Activated B cell treated with CpG ODN at 0.5 μM for 24 hours (primary cell): ENCODE measurements at regions of chr12 and their contacts with region 1.

Region 1: GRCh38 chr12:108664338-108665258 is 30.9 kb upstream of the SELPLG start:
- DNase-seq: peak; percentile 33
- ATAC-seq: peak; percentile 97
- H3K4me3 Mint-ChIP-seq: peak overlapping the region; percentile 36
- H3K27ac Mint-ChIP-seq: peak overlapping the region; percentile 85
- H3K4me1 Mint-ChIP-seq: peaks cover 57% of the 10 kb centered on the region
- H3K27me3 Mint-ChIP-seq: no peaks in the 10 kb centered on the region
- CTCF ChIP-seq: peak; percentile 61

Region 2: GRCh38 chr12:108257004-108257403 is 407.6 kb before region 1 on chr12:
- CTCF ChIA-PET with region 1: no interaction called
- POLR2A ChIA-PET with region 1: no interaction called
- intact Hi-C with region 1: no loop called
- DNase-seq: no peak
- ATAC-seq: no peak
- H3K4me3 Mint-ChIP-seq: no peak overlapping the region
- H3K27ac Mint-ChIP-seq: no peak overlapping the region
- H3K4me1 Mint-ChIP-seq: no peaks in the 10 kb centered on the region
- H3K27me3 Mint-ChIP-seq: peaks cover 16% of the 10 kb centered on the region
- CTCF ChIP-seq: no peak

Region 3: DNA sequence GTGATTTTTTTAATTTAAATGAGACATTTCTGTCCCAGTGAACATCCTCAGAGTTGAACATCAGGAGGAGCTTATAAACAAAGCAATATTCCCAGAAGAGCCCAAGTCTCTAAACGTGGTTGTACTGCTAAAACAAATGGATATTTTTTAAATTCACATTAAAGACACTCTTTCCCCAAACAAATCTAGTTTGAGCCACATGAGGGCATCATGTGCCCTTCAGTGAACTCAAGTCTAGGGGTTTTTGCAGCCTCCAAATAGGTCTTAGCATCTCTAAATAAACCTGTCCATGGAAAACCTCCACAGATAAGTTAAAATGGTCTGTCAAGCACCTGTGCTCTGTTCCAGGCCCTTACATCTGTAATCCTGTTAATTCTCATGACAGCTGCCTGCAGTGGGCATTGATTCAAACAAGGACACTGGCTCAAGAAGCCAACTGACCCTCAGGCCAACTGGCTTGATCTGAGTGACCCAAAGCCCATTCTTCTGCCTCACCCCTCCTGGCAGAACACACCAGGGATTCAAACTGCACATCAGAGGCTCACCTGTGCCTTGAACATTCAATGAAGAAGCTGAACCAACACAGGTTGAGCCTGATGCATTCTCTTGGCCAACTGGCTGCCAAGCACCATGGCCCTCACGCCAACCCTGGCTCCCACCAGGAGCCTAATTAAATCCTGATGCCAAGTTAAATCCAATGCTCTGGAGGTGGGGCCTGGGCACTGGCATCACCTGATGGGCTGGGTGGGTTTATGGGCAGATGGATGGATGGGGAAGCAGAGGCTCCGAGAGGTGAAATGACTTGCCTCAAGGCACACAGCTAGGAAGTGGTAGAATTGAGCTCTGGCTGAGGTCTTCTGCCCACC is 93.6 kb before region 1 on chr12:
- CTCF ChIA-PET with region 1: interaction called, 27 read pairs
- POLR2A ChIA-PET with region 1: interaction called, 11 read pairs
- intact Hi-C with region 1: no loop called
- DNase-seq: no peak
- ATAC-seq: no peak
- H3K4me3 Mint-ChIP-seq: no peak overlapping the region
- H3K27ac Mint-ChIP-seq: peak overlapping the region; percentile 97
- H3K4me1 Mint-ChIP-seq: peaks cover 87% of the 10 kb centered on the region
- H3K27me3 Mint-ChIP-seq: no peaks in the 10 kb centered on the region
- CTCF ChIP-seq: no peak

Region 4: GRCh38 chr12:108618079-108618952 is 46.3 kb before region 1 on chr12:
- CTCF ChIA-PET with region 1: interaction called, 38 read pairs
- POLR2A ChIA-PET with region 1: interaction called, 17 read pairs
- intact Hi-C with region 1: loop called (anchors 1 kb)
- DNase-seq: peak; percentile 76
- ATAC-seq: peak; percentile 40
- H3K4me3 Mint-ChIP-seq: peak overlapping the region; percentile 19
- H3K27ac Mint-ChIP-seq: peak overlapping the region; percentile 53
- H3K4me1 Mint-ChIP-seq: peaks cover 70% of the 10 kb centered on the region
- H3K27me3 Mint-ChIP-seq: no peaks in the 10 kb centered on the region
- CTCF ChIP-seq: peak; percentile 60

Region 5: GRCh38 chr12:108640802-108641445 is 23.7 kb before region 1 on chr12:
- CTCF ChIA-PET with region 1: interaction called, 43 read pairs
- POLR2A ChIA-PET with region 1: interaction called, 74 read pairs
- intact Hi-C with region 1: no loop called
- DNase-seq: no peak
- ATAC-seq: no peak
- H3K4me3 Mint-ChIP-seq: peak overlapping the region; percentile 30
- H3K27ac Mint-ChIP-seq: peak overlapping the region; percentile 83
- H3K4me1 Mint-ChIP-seq: peaks cover 93% of the 10 kb centered on the region
- H3K27me3 Mint-ChIP-seq: no peaks in the 10 kb centered on the region
- CTCF ChIP-seq: no peak

Region 6: GRCh38 chr12:108691175-108691997 is 26.8 kb after region 1 on chr12:
- CTCF ChIA-PET with region 1: interaction called, 8 read pairs
- POLR2A ChIA-PET with region 1: interaction called, 10 read pairs
- intact Hi-C with region 1: loop called (anchors 1 kb)
- DNase-seq: peak; percentile 28
- ATAC-seq: peak; percentile 84
- H3K4me3 Mint-ChIP-seq: peak overlapping the region; percentile 77
- H3K27ac Mint-ChIP-seq: peak overlapping the region; percentile 89
- H3K4me1 Mint-ChIP-seq: peaks cover 54% of the 10 kb centered on the region
- H3K27me3 Mint-ChIP-seq: no peaks in the 10 kb centered on the region
- CTCF ChIP-seq: no peak

Region 7: DNA sequence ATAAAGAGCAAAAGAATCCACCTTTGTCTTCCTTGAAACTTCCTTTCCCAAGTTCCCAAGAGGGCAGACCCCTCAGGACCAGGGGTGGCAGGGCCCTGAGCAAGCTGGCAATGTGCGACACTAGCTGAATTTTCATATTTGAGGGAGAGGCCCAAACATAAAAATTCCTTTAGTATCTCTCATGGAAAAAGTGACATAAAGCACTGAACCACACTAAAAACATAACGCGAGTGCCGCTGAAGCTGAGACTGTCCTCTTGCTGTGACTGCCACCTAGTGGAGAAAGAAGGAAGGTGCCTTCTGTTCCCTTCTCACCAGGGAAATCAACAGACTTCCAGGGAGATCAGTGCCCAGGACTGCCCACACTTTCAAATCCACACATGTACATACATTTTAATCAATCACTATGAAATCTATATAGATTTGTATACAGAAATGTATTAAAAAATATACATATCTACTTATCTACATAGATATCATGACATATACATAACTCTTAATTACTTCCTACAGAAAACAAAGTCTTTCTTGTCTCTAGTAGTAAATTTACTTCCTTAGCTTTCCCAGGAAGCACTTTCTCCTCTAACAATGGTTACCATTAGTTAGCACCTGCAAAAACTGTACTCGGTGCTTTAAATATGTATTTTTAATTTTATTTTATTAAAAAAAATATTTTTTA is 139.0 kb after region 1 on chr12:
- CTCF ChIA-PET with region 1: interaction called, 208 read pairs
- POLR2A ChIA-PET with region 1: interaction called, 4 read pairs
- intact Hi-C with region 1: loop called (anchors 1 kb)
- DNase-seq: no peak
- ATAC-seq: peak; percentile 87
- H3K4me3 Mint-ChIP-seq: no peak overlapping the region
- H3K27ac Mint-ChIP-seq: peak overlapping the region; percentile 56
- H3K4me1 Mint-ChIP-seq: peaks cover 21% of the 10 kb centered on the region
- H3K27me3 Mint-ChIP-seq: no peaks in the 10 kb centered on the region
- CTCF ChIP-seq: peak; percentile 93